ENCODE measurements at regions of chr5 and their contacts with region 1.

Region 1: GRCh38 chr5:115296124-115297022 is at the start of gene CCDC112:
- DNase-seq: peak; percentile 81
- ATAC-seq: peak; percentile 87
- H3K4me3 Mint-ChIP-seq: peak within 1 kb of the TSS; percentile 67
- H3K27ac Mint-ChIP-seq: no peak within 1 kb of the TSS
- H3K4me1 Mint-ChIP-seq: peaks cover 10% of the 10 kb centered on the region
- H3K27me3 Mint-ChIP-seq: peaks cover 37% of the 10 kb centered on the region
- total RNA-seq, gene CCDC112: 0.40 to 1.5 TPM

Region 2: GRCh38 chr5:115079924-115080623 is 216.3 kb before region 1 on chr5:
- CTCF ChIA-PET with region 1: no interaction called
- DNase-seq: no peak
- ATAC-seq: no peak
- H3K4me3 Mint-ChIP-seq: no peak overlapping the region
- H3K27ac Mint-ChIP-seq: no peak overlapping the region
- H3K4me1 Mint-ChIP-seq: no peaks in the 10 kb centered on the region
- H3K27me3 Mint-ChIP-seq: peaks cover 15% of the 10 kb centered on the region

Region 3: DNA sequence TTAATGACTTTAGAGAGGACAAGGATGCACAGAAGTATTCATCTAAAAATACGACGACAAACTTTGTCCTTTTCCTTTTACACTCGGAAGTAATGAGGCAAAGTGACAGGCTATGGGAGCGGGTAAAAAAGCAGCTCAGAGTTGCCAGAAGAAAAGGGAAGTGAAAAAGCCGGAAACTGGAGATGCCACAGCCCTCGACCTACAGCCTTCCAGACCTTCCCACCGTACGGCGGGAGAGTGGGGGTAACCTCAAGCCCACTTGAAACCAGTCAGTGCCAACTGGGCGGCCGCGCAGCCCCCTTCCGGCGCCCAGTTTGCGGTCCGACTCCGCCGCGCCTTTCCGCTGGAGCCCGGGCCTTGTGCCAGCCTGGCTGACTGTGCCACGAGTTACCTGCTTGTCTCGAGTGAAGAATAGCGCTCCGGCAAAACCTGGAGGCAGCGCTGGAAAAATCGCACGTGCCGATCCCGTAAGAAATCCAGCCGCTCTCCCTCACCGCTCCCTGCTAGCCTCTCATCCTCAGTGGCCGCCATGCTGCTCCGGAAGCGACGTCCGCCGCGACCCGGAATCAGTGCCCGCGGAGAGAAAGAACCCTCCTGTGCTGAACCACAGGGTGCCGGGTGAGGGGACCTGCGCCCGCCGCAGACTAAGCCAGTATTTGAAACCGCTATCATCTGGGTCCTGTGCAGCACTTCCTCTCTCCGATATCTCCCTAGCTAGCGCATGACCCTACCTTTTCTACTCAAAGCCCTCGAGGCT is 33.9 kb before region 1 on chr5 and contains the start of gene PGGT1B:
- CTCF ChIA-PET with region 1: interaction called, 12 read pairs
- DNase-seq: peak; percentile 80
- ATAC-seq: peak; percentile 93
- H3K4me3 Mint-ChIP-seq: peak within 1 kb of the TSS; percentile 89
- H3K27ac Mint-ChIP-seq: peak within 1 kb of the TSS; percentile 92
- H3K4me1 Mint-ChIP-seq: peaks cover 35% of the 10 kb centered on the region
- H3K27me3 Mint-ChIP-seq: no peaks in the 10 kb centered on the region
- total RNA-seq, gene PGGT1B: 29.9 to 33.3 TPM

Measured in activated CD8-positive, alpha-beta memory T cell treated with anti-CD3 and anti-CD28 coated beads, Interleukin-2, amount 10 ng/mL, durations not matched to agents 7 days and 5 days (primary cell).